ENCODE measurements at regions of chr7 and their contacts with region 1.

Region 1: GRCh38 chr7:155947051-155947450 is 134.8 kb upstream of the SHH start:
- DNase-seq: no peak
- ATAC-seq: no peak

Region 2: DNA sequence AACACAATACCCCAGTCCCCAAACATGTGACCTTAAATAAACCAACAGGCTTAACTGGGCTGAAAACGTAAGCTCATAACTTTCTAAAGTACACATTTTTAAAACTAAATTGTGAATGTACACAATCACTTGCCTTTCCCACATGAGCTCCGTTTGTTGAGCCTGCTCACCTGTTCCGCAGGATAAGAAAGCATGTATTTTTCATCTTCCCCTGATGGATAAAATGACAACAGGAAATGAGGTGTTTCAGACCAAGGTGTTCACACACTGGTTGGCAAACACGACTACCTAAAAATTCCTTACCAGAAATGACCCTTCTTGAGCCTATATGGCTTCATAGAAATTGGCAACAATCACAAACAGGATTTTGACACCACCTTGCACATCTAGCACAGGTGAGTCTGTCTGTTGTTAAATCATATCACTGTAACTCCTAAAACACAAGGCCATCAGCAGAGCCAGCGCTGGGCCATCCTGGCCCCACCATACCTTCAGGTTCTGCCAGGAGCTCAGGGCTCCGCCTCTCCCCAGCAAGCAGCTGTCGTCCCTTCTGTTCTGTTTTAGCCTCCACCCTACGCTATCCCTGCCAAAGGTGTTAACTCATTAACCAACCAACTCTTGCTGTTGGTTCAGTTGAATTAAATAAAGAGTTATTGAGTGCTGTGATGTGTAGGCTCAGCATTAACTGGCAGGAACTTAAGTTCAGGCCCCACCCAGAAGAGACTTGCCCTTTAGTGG is 619.9 kb after region 1 on chr7:
- intact Hi-C with region 1: loop called (anchors 5 kb)
- DNase-seq: no peak
- ATAC-seq: no peak

Measured in sciatic nerve (tissue), 2 donors.